Activated CD4-positive, alpha-beta memory T cell treated with anti-CD3 and anti-CD28 coated beads for 36 hours (primary cell): ENCODE measurements at regions of chr4 and their contacts with region 1.

Region 1: GRCh38 chr4:38759113-38759789 is 23.5 kb downstream of the TLR10 start:
- DNase-seq: peak; percentile 74
- H3K4me3 Mint-ChIP-seq: no peak overlapping the region
- H3K27ac Mint-ChIP-seq: no peak overlapping the region
- H3K4me1 Mint-ChIP-seq: peaks cover 7% of the 10 kb centered on the region
- H3K27me3 Mint-ChIP-seq: no peaks in the 10 kb centered on the region

Region 2: GRCh38 chr4:38743866-38744265 is 15.4 kb before region 1 on chr4:
- CTCF ChIA-PET with region 1: interaction called, 14 read pairs
- POLR2A ChIA-PET with region 1: no interaction called
- intact Hi-C with region 1: no loop called
- DNase-seq: no peak
- H3K4me3 Mint-ChIP-seq: no peak overlapping the region
- H3K27ac Mint-ChIP-seq: no peak overlapping the region
- H3K4me1 Mint-ChIP-seq: peaks cover 3% of the 10 kb centered on the region
- H3K27me3 Mint-ChIP-seq: no peaks in the 10 kb centered on the region

Region 3: DNA sequence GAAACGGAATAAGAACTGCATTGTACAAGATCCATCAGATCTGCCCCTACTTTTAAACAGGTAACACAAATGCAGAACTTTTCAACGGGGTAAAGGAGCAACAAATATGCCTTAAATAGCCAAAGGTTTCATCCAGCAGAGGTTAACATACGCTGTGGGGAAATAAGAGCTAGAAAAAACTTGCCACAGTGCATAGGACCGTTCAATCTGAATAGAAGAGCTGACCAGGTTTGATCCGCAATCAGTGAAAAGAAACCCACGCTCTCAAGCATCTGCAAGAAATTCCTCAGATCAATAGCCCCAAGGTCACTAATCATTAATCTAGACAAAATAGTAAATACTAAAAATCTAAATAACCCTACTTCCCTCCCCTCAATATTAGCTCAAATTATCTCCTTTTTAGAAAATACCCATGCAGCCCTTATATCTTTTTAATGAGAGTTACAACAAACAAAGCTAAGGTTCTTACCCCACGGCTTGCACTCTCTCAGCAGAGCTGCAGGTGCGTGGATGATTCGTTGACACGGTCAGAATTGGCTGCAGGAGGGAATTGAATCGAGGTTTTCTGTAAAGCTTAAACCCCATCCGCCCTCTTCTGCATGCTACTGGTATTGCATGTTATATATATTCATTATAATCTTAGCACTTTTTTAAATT is 23.3 kb after region 1 on chr4 and contains the start of gene TLR10:
- CTCF ChIA-PET with region 1: interaction called, 78 read pairs
- POLR2A ChIA-PET with region 1: no interaction called
- intact Hi-C with region 1: loop called (anchors 1 kb)
- DNase-seq: peak; percentile 35
- H3K4me3 Mint-ChIP-seq: peak within 1 kb of the TSS; percentile 23
- H3K27ac Mint-ChIP-seq: no peak within 1 kb of the TSS
- H3K4me1 Mint-ChIP-seq: peaks cover 4% of the 10 kb centered on the region
- H3K27me3 Mint-ChIP-seq: peaks cover 2% of the 10 kb centered on the region
- total RNA-seq, gene TLR10: 0.05 TPM in 1 of 2 experiments, not detected in the other

Region 4: GRCh38 chr4:38804654-38805295 is 45.5 kb after region 1 on chr4 and contains the start of gene TLR1:
- CTCF ChIA-PET with region 1: interaction called, 43 read pairs
- POLR2A ChIA-PET with region 1: no interaction called
- intact Hi-C with region 1: loop called (anchors 1 kb)
- DNase-seq: peak; percentile 24
- H3K4me3 Mint-ChIP-seq: peak within 1 kb of the TSS; percentile 76
- H3K27ac Mint-ChIP-seq: peak within 1 kb of the TSS; percentile 91
- H3K4me1 Mint-ChIP-seq: peaks cover 35% of the 10 kb centered on the region
- H3K27me3 Mint-ChIP-seq: no peaks in the 10 kb centered on the region
- total RNA-seq, gene TLR1: 1.5 to 1.8 TPM

Region 5: DNA sequence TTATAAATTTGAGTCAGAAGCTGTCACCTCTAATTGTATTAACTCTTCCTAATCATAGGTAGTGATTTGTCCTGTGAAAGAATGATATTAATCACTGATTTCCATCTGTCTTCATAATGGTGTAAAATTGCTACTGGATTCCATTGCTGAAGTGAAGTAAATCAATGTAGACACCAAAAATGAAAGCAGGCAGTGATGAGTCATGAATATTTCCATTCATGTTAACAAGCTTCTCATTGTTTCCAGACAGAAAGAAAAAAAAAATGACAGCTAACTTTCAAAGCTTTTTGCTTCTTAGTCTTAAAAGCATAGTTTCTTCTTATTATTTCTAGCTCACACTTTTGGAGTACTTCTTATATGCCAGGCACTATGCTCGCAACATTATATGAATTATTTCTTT is 129.9 kb after region 1 on chr4:
- CTCF ChIA-PET with region 1: interaction called, 15 read pairs
- POLR2A ChIA-PET with region 1: no interaction called
- intact Hi-C with region 1: no loop called
- DNase-seq: no peak
- H3K4me3 Mint-ChIP-seq: peak overlapping the region; percentile 48
- H3K27ac Mint-ChIP-seq: peak overlapping the region; percentile 81
- H3K4me1 Mint-ChIP-seq: peaks cover 22% of the 10 kb centered on the region
- H3K27me3 Mint-ChIP-seq: no peaks in the 10 kb centered on the region

Region 6: GRCh38 chr4:39134683-39135319 is 375.6 kb after region 1 on chr4:
- CTCF ChIA-PET with region 1: interaction called, 37 read pairs
- POLR2A ChIA-PET with region 1: no interaction called
- intact Hi-C with region 1: loop called (anchors 2 kb)
- DNase-seq: no peak
- H3K4me3 Mint-ChIP-seq: no peak overlapping the region
- H3K27ac Mint-ChIP-seq: no peak overlapping the region
- H3K4me1 Mint-ChIP-seq: peaks cover 7% of the 10 kb centered on the region
- H3K27me3 Mint-ChIP-seq: no peaks in the 10 kb centered on the region

Region 7: GRCh38 chr4:39201963-39202362 is 442.7 kb after region 1 on chr4:
- CTCF ChIA-PET with region 1: no interaction called
- POLR2A ChIA-PET with region 1: no interaction called
- intact Hi-C with region 1: no loop called
- DNase-seq: no peak
- H3K4me3 Mint-ChIP-seq: no peak overlapping the region
- H3K27ac Mint-ChIP-seq: no peak overlapping the region
- H3K4me1 Mint-ChIP-seq: no peaks in the 10 kb centered on the region
- H3K27me3 Mint-ChIP-seq: no peaks in the 10 kb centered on the region